Vagina (tissue), 2 donors: ENCODE measurements at regions of chr16 and their contacts with region 1.

Region 1: GRCh38 chr16:73122604-73123391 is 74.9 kb upstream of the ZFHX3 start:
- DNase-seq: no peak
- H3K4me3 ChIP-seq: no peak overlapping the region
- H3K27ac ChIP-seq: peak overlapping the region; percentile 0
- H3K4me1 ChIP-seq: peaks cover 6% of the 10 kb centered on the region
- H3K27me3 ChIP-seq: no peaks in the 10 kb centered on the region
- CTCF ChIP-seq: no peak
- POLR2A ChIP-seq: no peak

Region 2: GRCh38 chr16:72947379-72948237 is 175.2 kb before region 1 on chr16:
- intact Hi-C with region 1: no loop called
- DNase-seq: no peak
- H3K4me3 ChIP-seq: no peak overlapping the region
- H3K27ac ChIP-seq: no peak overlapping the region
- H3K4me1 ChIP-seq: peaks cover 5% of the 10 kb centered on the region
- H3K27me3 ChIP-seq: no peaks in the 10 kb centered on the region
- CTCF ChIP-seq: no peak
- POLR2A ChIP-seq: no peak

Region 3: GRCh38 chr16:73020362-73020884 is 102.4 kb before region 1 on chr16:
- intact Hi-C with region 1: no loop called
- DNase-seq: no peak
- H3K4me3 ChIP-seq: no peak overlapping the region
- H3K27ac ChIP-seq: no peak overlapping the region
- H3K4me1 ChIP-seq: peaks cover 47% of the 10 kb centered on the region
- H3K27me3 ChIP-seq: no peaks in the 10 kb centered on the region
- CTCF ChIP-seq: no peak
- POLR2A ChIP-seq: no peak

Region 4: GRCh38 chr16:74451951-74452758 is 1329.4 kb after region 1 on chr16:
- intact Hi-C with region 1: loop called (anchors 10 kb)
- DNase-seq: no peak
- H3K4me3 ChIP-seq: no peak overlapping the region
- H3K27ac ChIP-seq: peak overlapping the region; percentile 24
- H3K4me1 ChIP-seq: peaks cover 39% of the 10 kb centered on the region
- H3K27me3 ChIP-seq: no peaks in the 10 kb centered on the region
- CTCF ChIP-seq: no peak
- POLR2A ChIP-seq: no peak